AG04449 (cell line): ENCODE measurements at regions of chr6 and their contacts with region 1.

Region 1: DNA sequence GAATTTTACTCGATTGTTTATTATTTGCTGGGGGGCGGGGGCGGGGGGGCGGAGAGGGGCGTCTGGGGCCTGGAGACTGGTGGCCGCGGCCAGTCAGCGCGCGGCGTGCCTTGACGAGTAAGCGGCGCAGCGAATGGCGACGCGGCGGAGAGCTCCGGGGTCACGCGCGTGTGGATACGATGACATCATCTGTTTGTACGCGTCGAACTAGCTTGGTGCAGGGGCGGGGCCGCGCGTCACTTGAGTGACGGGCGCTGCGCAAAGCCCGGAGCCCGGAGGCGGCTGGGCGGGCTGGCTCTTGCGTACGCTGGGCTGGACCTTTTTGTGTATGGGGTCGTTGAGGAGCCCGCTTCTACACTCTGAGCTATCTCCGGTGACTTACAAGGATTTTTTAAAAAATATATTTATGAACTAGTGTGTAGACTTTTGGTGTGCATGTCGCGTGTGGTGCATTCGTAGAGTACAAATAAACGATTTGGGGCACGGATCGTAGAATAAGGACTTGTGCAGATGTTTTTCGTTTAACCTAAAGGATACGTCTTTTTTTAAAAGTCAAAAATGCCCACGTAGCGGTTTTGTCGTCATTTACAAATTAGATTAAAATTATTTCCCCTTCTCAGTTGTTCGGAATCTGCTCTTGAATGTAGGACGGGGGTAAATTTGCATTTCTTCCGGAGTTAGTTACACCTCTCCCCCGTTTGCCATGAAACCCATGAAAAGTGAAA is 2.2 kb upstream of the FOXO3 start:
- DNase-seq: peak; percentile 94
- H3K4me3 ChIP-seq: peak overlapping the region; percentile 65
- CTCF ChIP-seq: no peak

Region 2: GRCh38 chr6:108589287-108589791 is 30.8 kb after region 1 on chr6:
- CTCF ChIA-PET with region 1: interaction called, 3 read pairs
- POLR2A ChIA-PET with region 1: interaction called, 14 read pairs
- DNase-seq: no peak
- H3K4me3 ChIP-seq: no peak overlapping the region
- CTCF ChIP-seq: no peak

Region 3: GRCh38 chr6:108651340-108652227 is 93.0 kb after region 1 on chr6:
- CTCF ChIA-PET with region 1: interaction called, 4 read pairs
- POLR2A ChIA-PET with region 1: interaction called, 11 read pairs
- DNase-seq: peak; percentile 74
- H3K4me3 ChIP-seq: no peak overlapping the region
- CTCF ChIP-seq: no peak

Region 4: GRCh38 chr6:108835218-108835850 is 276.8 kb after region 1 on chr6:
- CTCF ChIA-PET with region 1: interaction called, 15 read pairs
- POLR2A ChIA-PET with region 1: interaction called, 4 read pairs
- DNase-seq: peak; percentile 16
- H3K4me3 ChIP-seq: no peak overlapping the region
- CTCF ChIP-seq: peak; percentile 93

Region 5: DNA sequence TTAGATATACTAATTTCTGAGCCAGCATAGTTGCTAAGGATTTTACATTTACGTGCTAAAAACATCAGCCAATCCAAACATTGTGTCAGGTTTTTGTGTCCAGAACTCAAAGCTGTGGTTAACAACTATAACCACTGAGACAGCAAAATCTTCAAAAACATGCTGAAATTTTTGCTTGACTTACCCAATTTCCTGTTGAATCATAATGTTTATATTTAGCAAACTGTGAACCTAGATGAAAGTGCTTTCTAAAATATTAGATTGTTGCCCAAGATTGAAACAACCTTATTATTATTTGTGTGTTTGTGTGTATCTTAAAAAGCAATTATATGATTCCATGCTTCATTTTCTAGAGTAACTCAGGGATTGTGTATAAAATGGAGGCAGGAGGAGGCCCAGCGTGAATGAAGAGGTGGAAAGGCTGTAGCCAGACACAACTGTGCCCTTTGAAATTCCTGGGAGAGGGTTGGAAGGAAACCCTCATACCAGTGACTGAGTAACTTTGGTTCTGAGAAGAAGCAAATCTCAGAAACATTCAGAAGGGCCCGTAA is 337.7 kb after region 1 on chr6:
- CTCF ChIA-PET with region 1: interaction called, 16 read pairs
- POLR2A ChIA-PET with region 1: interaction called, 3 read pairs
- DNase-seq: peak; percentile 84
- H3K4me3 ChIP-seq: no peak overlapping the region
- CTCF ChIP-seq: no peak

Region 6: DNA sequence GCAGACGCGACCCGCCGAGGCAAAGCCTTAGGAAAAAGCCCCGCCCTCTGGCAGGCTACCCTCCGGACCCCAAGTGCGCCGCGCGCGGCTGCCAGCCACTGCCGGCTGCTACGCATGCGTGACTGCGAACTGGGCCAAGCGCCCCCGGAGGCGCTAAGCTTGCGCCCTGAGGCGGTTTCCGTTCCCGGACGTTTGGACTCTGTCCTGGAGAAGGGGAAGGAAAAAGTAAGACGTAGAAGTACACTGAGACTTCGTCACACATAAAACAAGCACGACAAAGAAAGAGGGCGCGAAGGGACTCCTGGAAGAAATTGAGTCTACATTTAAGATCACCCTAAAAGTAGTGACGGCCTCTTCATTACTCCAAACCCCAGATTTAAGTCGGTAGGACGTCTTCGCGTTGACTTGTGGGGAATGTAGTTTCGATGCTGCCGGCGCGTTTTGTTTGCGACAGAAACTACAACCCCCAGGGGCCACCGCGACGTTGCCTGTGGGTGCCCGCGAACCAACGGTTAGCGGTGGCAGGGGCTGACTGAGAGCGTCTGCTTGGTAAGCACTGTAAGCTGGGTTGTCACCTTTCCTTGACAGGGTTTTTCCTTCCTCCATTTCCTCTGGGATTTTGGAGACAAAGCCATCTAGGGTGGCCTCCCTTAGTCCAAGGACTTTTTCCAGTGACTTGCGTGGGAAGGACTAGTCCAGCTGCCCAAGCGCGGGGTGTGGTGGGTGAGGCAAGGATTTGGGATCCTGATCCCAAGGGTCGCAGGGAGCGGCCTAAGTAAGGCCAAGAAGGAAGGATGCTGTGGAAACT is 536.7 kb after region 1 on chr6 and contains the start of gene CEP57L1:
- CTCF ChIA-PET with region 1: no interaction called
- POLR2A ChIA-PET with region 1: interaction called, 14 read pairs
- DNase-seq: peak; percentile 85
- H3K4me3 ChIP-seq: peak within 1 kb of the TSS; percentile 91
- CTCF ChIP-seq: no peak